ENCODE measurements at regions of chr17 and their contacts with region 1.

Region 1: GRCh38 chr17:29148790-29149430 is 31.3 kb downstream of the MYO18A start:
- DNase-seq: peak; percentile 94
- H3K4me3 Mint-ChIP-seq: peak overlapping the region; percentile 65
- H3K27ac Mint-ChIP-seq: peak overlapping the region; percentile 74
- H3K4me1 Mint-ChIP-seq: peaks cover 43% of the 10 kb centered on the region
- H3K27me3 Mint-ChIP-seq: no peaks in the 10 kb centered on the region

Region 2: GRCh38 chr17:29078183-29079045 is 70.5 kb before region 1 on chr17:
- CTCF ChIA-PET with region 1: no interaction called
- intact Hi-C with region 1: no loop called
- DNase-seq: no peak
- H3K4me3 Mint-ChIP-seq: no peak overlapping the region
- H3K27ac Mint-ChIP-seq: no peak overlapping the region
- H3K4me1 Mint-ChIP-seq: no peaks in the 10 kb centered on the region
- H3K27me3 Mint-ChIP-seq: no peaks in the 10 kb centered on the region

Region 3: GRCh38 chr17:29124117-29124924 is 24.6 kb before region 1 on chr17:
- CTCF ChIA-PET with region 1: interaction called, 120 read pairs
- intact Hi-C with region 1: loop called (anchors 1 kb)
- DNase-seq: peak; percentile 68
- H3K4me3 Mint-ChIP-seq: no peak overlapping the region
- H3K27ac Mint-ChIP-seq: no peak overlapping the region
- H3K4me1 Mint-ChIP-seq: peaks cover 2% of the 10 kb centered on the region
- H3K27me3 Mint-ChIP-seq: no peaks in the 10 kb centered on the region

Region 4: DNA sequence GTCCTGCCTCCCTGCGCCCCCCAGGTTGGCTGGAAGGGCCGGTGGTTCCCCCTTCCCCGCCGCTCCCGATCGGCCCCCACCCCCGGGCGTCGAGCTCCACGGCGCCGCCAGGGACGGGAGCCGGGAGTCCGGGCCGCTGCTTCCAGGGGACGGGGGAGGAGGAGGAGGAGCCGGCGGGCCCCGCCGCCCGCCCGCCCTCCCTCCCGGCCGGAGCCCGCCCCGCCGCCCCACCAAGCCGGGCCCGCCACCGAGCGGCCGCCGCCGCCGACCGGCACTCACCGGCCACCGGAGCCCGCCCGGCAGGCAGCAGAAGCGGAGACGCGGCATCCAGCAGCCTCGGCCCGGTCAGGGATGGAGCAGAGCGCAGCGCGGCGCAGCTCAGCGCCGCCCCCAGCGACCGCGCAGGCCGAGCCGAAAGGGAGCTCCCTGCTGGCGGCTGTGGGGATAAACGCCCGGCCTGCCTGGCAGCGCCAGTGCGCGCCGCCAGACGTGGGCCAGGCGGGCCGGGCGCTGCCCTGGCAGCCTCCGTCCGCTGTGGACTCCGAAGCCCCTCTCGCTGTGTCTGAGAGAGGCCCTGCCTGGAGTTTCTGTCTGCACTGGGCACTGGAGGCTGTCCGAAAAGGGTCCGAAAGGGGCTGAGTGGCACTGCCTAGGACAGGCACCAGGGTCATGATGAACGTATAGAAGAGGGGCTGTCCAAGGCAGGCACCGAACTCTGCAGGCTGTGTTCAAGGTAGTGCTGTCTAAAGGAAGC is 31.3 kb after region 1 on chr17 and contains the start of gene MYO18A:
- CTCF ChIA-PET with region 1: interaction called, 261 read pairs
- intact Hi-C with region 1: loop called (anchors 1 kb)
- DNase-seq: peak; percentile 84
- H3K4me3 Mint-ChIP-seq: peak within 1 kb of the TSS; percentile 55
- H3K27ac Mint-ChIP-seq: no peak within 1 kb of the TSS
- H3K4me1 Mint-ChIP-seq: peaks cover 26% of the 10 kb centered on the region
- H3K27me3 Mint-ChIP-seq: no peaks in the 10 kb centered on the region
- total RNA-seq, gene MYO18A: 23.8 to 25.0 TPM

Region 5: GRCh38 chr17:29241015-29241963 is 92.4 kb after region 1 on chr17:
- CTCF ChIA-PET with region 1: interaction called, 7 read pairs
- intact Hi-C with region 1: loop called (anchors 1 kb)
- DNase-seq: peak; percentile 66
- H3K4me3 Mint-ChIP-seq: no peak overlapping the region
- H3K27ac Mint-ChIP-seq: no peak overlapping the region
- H3K4me1 Mint-ChIP-seq: peaks cover 14% of the 10 kb centered on the region
- H3K27me3 Mint-ChIP-seq: no peaks in the 10 kb centered on the region

Region 6: GRCh38 chr17:29357821-29358232 is 208.9 kb after region 1 on chr17:
- CTCF ChIA-PET with region 1: no interaction called
- intact Hi-C with region 1: loop called (anchors 5 kb)
- DNase-seq: no peak
- H3K4me3 Mint-ChIP-seq: no peak overlapping the region
- H3K27ac Mint-ChIP-seq: no peak overlapping the region
- H3K4me1 Mint-ChIP-seq: no peaks in the 10 kb centered on the region
- H3K27me3 Mint-ChIP-seq: no peaks in the 10 kb centered on the region

Region 7: DNA sequence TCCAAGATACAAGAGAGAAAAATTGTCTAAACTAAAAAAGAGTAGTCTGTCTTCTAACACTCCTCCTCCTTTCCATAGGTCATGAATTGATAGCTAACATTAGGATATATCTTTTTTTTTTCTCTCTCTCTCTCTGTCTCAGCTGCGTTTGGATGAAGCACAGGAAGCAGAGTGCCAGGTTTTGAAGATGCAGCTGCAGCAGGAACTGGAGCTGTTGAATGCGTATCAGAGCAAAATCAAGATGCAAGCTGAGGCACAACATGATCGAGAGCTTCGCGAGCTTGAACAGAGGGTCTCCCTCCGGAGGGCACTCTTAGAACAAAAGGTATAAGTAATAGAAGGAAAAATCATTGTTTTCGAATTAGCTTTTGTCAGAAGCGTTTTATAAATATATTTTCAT is 385.1 kb after region 1 on chr17:
- CTCF ChIA-PET with region 1: no interaction called
- intact Hi-C with region 1: loop called (anchors 5 kb)
- DNase-seq: no peak
- H3K4me3 Mint-ChIP-seq: no peak overlapping the region
- H3K27ac Mint-ChIP-seq: no peak overlapping the region
- H3K4me1 Mint-ChIP-seq: no peaks in the 10 kb centered on the region
- H3K27me3 Mint-ChIP-seq: no peaks in the 10 kb centered on the region

Region 8: GRCh38 chr17:29732613-29733012 is 583.7 kb after region 1 on chr17:
- CTCF ChIA-PET with region 1: no interaction called
- intact Hi-C with region 1: no loop called
- DNase-seq: no peak
- H3K4me3 Mint-ChIP-seq: no peak overlapping the region
- H3K27ac Mint-ChIP-seq: no peak overlapping the region
- H3K4me1 Mint-ChIP-seq: peaks cover 55% of the 10 kb centered on the region
- H3K27me3 Mint-ChIP-seq: no peaks in the 10 kb centered on the region